Activated CD4-positive, alpha-beta memory T cell treated with anti-CD3 and anti-CD28 coated beads, Interleukin-2, amount 10 ng/mL, durations not matched to agents 7 days and 5 days (primary cell): ENCODE measurements at regions of chr1 and their contacts with region 1.

Region 1: GRCh38 chr1:244835276-244836134 is at the start of gene COX20:
- DNase-seq: peak; percentile 88
- H3K4me3 Mint-ChIP-seq: peak within 1 kb of the TSS; percentile 83
- H3K27ac Mint-ChIP-seq: peak within 1 kb of the TSS; percentile 99
- H3K4me1 Mint-ChIP-seq: peaks cover 50% of the 10 kb centered on the region
- H3K27me3 Mint-ChIP-seq: no peaks in the 10 kb centered on the region
- total RNA-seq, gene COX20: 22.2 to 22.9 TPM

Region 2: DNA sequence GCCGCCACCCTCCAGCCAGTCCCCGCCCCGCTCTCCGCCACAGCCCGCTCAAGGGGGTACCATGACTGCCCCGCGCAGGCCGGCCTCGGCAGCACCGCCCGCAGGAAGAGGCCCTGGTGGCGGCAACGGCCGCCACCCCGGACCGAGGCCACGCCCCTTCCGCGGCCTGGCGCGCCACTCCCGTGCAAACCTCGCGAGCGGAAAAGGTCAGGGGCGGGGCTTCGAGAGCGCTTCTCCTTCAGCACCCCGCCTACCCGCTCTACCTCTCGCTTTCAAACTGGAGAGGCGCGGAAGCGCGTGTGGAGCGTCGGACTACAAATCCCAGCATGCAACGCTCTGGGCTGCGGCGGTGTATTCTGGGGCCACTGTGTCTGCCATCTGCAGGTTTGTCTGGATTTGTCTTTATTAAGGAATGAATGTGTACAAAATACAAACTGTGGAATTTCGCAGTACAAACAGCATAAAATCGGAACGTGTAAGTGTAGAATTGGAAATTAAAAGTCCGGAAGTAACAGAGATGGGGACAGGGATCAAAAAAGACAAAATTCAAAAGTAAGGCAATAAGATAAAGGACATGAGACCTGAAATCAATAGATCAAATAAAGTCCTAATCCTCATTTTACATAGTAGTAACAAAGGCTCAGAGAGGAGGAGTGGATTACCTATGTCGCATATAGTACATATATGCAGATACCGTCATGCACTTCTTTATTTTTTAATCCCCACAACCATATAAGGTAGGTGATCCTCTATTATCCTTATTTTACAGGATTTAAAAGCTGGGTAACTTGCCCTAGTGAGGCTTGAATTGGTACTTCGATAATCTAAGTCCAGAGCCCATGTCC is 383.3 kb before region 1 on chr1:
- CTCF ChIA-PET with region 1: no interaction called
- POLR2A ChIA-PET with region 1: interaction called, 14 read pairs
- DNase-seq: peak; percentile 99
- H3K4me3 Mint-ChIP-seq: peak overlapping the region; percentile 90
- H3K27ac Mint-ChIP-seq: peak overlapping the region; percentile 93
- H3K4me1 Mint-ChIP-seq: peaks cover 38% of the 10 kb centered on the region
- H3K27me3 Mint-ChIP-seq: no peaks in the 10 kb centered on the region

Region 3: DNA sequence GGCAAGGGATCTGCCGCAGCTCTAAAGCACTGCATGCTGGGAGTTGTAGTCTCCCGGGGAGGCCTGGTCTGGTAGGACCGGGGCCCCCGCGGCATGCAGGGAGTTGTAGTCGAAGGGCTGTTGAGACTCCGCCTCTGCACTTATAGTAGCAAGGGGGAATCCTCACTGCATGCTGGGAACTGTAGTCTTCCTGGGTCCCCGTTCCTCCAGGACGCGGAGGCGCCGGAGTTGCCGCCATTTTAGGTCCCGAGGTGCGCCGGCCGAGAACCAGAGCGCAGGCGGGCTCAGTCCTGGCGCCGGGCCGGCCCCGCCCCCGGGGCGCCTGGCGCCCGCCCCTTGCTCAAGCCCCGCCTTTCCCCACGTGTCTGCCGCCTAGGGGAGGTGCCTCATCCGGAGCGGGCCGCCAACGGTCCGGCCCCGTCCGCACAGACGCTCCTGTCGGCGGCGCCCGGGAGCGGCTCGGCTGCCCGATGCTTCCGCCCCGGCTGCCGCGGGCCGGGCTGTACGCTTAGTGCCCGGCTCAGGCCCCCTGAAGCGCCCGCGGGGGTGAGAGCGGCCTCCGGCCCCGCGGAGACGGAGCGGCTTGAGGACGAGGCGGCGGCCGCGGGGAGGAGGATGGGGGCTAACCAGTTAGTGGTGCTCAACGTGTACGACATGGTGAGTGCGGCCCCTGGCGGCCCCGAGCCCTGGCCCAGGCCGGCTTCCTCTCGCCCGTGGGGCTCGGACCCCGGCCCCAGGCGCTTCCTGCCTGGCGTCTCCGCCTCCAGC is 182.6 kb before region 1 on chr1 and contains the start of gene DESI2:
- CTCF ChIA-PET with region 1: no interaction called
- POLR2A ChIA-PET with region 1: interaction called, 14 read pairs
- DNase-seq: peak; percentile 98
- H3K4me3 Mint-ChIP-seq: peak within 1 kb of the TSS; percentile 76
- H3K27ac Mint-ChIP-seq: peak within 1 kb of the TSS; percentile 79
- H3K4me1 Mint-ChIP-seq: peaks cover 15% of the 10 kb centered on the region
- H3K27me3 Mint-ChIP-seq: peaks cover 4% of the 10 kb centered on the region
- total RNA-seq, gene DESI2: 26.6 to 31.4 TPM

Region 4: DNA sequence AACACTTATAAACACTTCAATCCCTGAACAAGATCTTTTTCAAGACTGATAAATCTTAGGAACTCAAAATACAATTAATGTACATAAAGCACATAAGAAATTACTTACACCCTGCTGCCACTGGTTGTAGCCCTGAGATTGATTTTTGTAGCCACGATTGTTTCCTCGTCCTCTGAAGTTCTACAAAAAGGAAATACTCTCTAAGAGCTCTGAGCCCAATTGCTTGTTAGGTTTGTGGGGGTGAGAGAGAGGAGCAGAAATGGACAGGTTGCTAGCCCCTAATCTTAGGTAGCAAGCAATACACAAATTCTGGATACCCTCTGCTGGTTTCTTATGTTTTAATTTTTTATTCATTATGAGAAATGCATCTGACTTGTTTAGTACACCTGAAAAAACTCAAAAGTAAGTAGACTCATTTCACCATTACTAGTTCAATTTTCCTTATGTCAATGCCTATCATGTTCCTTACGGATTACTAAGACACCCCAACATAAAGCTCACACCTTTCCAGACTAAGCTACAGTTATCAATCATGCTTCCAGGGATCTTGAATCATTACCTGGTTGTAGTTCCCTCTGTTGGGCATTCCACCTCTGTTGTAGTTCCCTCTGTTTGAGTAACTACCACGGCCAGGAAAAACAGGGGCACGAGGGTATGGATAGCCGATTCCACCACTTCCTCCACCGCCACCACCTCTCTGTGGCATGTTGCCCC is 19.5 kb after region 1 on chr1:
- CTCF ChIA-PET with region 1: interaction called, 92 read pairs
- POLR2A ChIA-PET with region 1: interaction called, 925 read pairs
- DNase-seq: no peak
- H3K4me3 Mint-ChIP-seq: peak overlapping the region; percentile 37
- H3K27ac Mint-ChIP-seq: peak overlapping the region; percentile 70
- H3K4me1 Mint-ChIP-seq: peaks cover 80% of the 10 kb centered on the region
- H3K27me3 Mint-ChIP-seq: no peaks in the 10 kb centered on the region

Region 5: GRCh38 chr1:244970661-244971551 is 135.4 kb after region 1 on chr1:
- CTCF ChIA-PET with region 1: interaction called, 13 read pairs
- POLR2A ChIA-PET with region 1: interaction called, 57 read pairs
- DNase-seq: peak; percentile 91
- H3K4me3 Mint-ChIP-seq: peak overlapping the region; percentile 86
- H3K27ac Mint-ChIP-seq: peak overlapping the region; percentile 95
- H3K4me1 Mint-ChIP-seq: peaks cover 22% of the 10 kb centered on the region
- H3K27me3 Mint-ChIP-seq: no peaks in the 10 kb centered on the region